Adrenal gland (tissue), 19 donors: ENCODE measurements at regions of chr11 and their contacts with region 1.

Region 1: DNA sequence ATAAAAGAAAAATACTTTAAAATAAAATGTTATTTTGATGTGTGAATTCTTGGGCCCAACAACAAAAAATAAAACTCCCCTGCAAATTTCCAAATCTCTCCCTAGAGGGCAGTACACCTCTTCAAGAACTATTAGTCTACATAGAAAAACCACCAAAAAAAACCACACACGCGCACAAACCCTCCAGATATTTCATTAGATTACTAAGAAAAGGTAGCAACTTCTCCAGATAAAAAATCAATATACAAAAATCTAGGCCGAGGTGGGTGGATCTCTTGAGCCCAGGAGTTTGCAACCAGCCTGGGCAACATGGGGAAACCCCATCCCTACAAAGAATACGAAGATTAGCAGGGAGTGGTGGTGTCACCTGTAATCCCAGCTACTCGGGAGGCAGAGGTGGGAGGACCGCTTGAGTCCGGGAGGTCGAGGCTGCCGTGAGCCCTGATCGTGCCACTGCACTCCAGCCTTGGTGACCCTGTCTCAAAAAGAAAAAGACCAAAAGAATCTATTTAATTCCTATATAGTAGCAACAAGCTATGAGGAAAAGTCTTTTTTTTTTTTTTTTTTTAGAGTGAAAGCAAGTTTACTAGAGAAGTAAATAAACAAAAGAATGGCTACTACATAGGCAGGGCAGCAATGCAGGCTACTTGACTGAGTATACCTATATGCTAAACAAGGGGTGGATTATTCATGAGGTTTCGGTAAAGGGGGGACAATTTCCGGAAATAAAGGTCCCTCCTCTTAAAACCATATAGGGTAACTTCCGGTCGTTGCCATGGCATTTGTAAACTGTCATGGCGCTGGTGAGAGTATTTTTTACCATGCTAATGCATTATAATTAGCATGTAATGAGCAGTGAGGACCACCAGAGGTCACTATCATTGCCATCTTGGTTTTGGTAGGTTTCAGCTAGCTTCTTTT is 13.1 kb downstream of the B3GNT6 start:
- DNase-seq: peak; percentile 83 to 94 (median 91)
- H3K4me3 ChIP-seq: peak overlapping the region in 2 of 4 donors; percentile 30 to 56
- H3K27ac ChIP-seq: peak overlapping the region in 2 of 5 donors; percentile 46 to 70
- H3K4me1 ChIP-seq: peaks cover 0 to 5% of the 10 kb centered on the region in 2 donors
- H3K27me3 ChIP-seq: peaks cover 7% of the 10 kb centered on the region
- CTCF ChIP-seq: peak; percentile 68 to 95 (median 80)
- POLR2A ChIP-seq: no peak

Region 2: DNA sequence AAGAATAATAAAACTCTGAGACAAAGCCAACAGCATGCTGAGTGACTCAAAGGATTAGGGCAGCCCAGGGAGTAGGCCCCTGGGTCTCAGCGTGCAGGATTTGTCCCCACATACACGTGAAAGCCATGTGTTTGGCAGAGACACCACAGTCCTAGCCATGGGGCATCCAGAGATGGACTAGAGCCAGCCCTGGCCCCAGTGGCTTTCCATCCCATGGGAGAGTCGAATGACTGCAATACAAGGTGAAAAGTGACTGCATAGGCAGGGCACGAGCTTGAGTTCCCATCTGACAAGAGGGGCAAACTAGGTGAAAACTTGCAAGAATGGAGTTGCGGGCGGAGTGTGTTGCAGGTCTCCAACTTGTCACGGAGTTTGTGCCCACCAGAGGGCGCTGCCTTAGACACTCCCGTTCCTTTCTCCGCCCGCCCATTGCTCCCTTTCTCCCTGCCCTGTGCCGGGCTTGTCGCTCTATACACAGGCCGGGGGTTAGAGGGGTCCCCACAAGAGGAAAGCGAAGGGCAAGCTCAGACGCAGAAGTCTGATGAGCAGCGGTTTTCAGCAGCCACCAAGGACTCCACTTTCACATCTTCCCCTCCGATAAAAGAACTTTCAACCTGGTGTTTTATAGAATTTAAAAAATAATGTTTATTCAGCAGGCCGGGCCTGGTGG is 239.9 kb before region 1 on chr11:
- intact Hi-C with region 1: loop called in 1 of 2 experiments (anchors 10 kb)
- DNase-seq: peak; percentile 79 to 94 (median 89)
- H3K4me3 ChIP-seq: no peak overlapping the region
- H3K27ac ChIP-seq: peak overlapping the region in 1 of 5 donors; percentile 0
- H3K4me1 ChIP-seq: peaks cover 0 to 4% of the 10 kb centered on the region in 2 donors
- H3K27me3 ChIP-seq: no peaks in the 10 kb centered on the region
- CTCF ChIP-seq: peak; percentile 64 to 85 (median 76)
- POLR2A ChIP-seq: no peak

Region 3: GRCh38 chr11:76872959-76873827 is 174.1 kb before region 1 on chr11:
- intact Hi-C with region 1: no loop called
- DNase-seq: no peak
- H3K4me3 ChIP-seq: no peak overlapping the region
- H3K27ac ChIP-seq: no peak overlapping the region
- H3K4me1 ChIP-seq: no peaks in the 10 kb centered on the region
- H3K27me3 ChIP-seq: no peaks in the 10 kb centered on the region
- CTCF ChIP-seq: no peak
- POLR2A ChIP-seq: no peak

Region 4: DNA sequence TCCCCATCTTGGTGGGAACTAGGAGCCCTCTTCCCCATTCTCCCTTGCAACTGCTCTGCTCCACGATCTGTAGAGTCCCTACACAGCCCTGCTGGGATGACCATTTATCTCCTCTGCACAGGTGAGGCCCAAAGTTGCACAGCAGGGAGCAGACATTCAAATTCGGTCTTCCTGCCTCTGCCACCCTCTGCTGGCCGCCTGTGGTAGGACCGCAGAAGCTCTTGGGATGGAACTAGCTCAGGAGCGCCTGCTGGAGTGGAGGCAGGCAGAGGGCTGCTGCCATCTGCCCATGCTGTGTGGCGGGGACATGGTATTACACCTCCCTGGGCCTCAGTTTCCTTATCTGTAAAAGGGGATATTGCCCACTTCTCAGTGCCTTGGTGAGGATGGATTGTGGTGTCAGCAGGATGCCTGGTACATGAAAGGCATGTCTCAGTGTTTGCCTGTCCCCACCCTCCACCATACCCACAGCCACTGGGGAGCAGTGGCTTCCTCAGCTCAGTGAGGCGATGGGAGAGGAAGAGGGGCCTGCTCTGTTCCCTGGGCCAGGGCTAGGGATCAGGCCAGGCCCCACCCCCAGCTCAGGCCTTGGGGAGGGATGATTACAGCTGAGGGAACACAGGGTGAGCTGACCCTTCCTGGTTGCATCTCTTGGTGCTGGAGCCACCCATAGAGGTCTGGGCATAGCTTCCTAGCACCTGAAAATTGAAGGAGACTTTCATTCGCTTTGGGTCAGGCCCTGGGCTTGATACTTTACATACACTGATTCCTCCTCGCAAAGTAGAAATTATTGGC is 44.1 kb after region 1 on chr11:
- intact Hi-C with region 1: loop called (anchors 2 to 5 kb)
- DNase-seq: peak; percentile 80 to 95 (median 87)
- H3K4me3 ChIP-seq: no peak overlapping the region
- H3K27ac ChIP-seq: peak overlapping the region in 1 of 5 donors; percentile 9
- H3K4me1 ChIP-seq: peaks cover 1 to 4% of the 10 kb centered on the region in 2 donors
- H3K27me3 ChIP-seq: no peaks in the 10 kb centered on the region
- CTCF ChIP-seq: peak; percentile 89 to 98 (median 95)
- POLR2A ChIP-seq: no peak

Region 5: DNA sequence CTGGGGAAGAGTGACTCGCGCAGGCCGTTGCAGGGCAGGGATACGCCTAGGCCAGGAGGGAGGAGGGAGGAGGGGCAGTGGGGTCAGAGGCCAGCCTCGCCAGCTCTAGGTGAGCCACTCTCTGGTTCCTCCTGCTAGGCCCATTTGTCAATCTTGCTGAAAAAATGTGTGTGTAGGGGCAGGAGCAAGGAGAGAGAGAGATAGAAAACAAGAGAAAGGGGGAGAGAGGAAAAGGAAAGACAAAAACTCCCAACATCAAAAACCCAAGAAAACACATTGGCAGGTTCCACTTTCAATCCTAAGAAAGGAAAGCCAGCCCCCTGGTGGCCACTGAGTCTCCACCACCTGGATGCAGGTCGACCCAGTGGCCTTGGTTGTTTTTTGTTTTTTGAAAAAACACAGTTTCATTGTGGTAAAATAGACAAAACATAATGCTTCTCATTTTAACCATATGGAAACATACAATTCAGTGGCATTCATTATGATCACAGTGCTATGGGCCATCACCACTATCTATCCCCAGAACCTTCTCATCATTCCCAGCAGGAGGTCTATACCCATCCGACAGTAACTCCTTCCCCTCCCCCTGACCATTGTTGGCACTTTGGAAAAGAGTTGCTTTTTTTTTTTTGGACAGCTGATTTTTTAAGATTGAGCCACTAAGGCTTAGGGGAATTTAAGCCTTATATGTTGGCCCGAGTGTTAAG is 66.3 kb after region 1 on chr11:
- intact Hi-C with region 1: loop called in 1 of 2 experiments (anchors 5 kb)
- DNase-seq: peak in 5 of 7 donors; percentile 59 to 77 (median 70)
- H3K4me3 ChIP-seq: no peak overlapping the region
- H3K27ac ChIP-seq: no peak overlapping the region
- H3K4me1 ChIP-seq: peaks cover 25 to 28% of the 10 kb centered on the region in 2 donors
- H3K27me3 ChIP-seq: no peaks in the 10 kb centered on the region
- CTCF ChIP-seq: peak; percentile 32 to 66 (median 45)
- POLR2A ChIP-seq: no peak

Region 6: DNA sequence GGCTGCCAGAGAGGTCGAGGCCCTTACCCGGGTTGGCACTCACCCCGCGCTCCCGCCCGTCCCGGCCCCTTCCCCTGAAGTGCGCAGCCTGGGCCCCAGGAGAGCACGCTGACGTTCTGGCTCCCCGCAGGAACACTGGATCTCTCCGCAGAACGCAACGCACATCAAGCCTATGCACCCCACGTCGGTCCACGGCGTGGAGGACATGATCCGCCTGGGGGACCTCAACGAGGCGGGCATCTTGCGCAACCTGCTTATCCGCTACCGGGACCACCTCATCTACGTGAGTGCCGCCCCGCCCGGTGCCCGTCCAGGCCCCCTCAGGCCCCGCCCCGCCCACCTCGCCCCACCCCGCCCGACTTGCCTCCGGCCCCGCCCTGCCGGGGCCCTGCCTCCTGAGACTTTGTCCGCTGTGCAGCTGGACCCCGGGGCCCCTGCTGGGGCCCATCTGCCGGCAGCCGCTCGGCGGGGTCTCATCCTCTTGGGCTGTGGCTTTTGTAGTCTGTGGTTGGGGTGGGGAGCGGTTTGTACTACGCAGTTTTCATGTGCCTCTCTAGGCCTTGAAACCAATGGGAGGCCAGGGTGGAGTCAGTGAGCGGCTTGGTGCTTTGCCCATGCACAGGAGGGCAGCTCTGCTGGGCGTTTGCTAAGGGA is 100.5 kb after region 1 on chr11:
- intact Hi-C with region 1: no loop called
- DNase-seq: no peak
- H3K4me3 ChIP-seq: no peak overlapping the region
- H3K27ac ChIP-seq: no peak overlapping the region
- H3K4me1 ChIP-seq: peaks cover 14 to 15% of the 10 kb centered on the region in 2 donors
- H3K27me3 ChIP-seq: no peaks in the 10 kb centered on the region
- CTCF ChIP-seq: no peak
- POLR2A ChIP-seq: no peak

Region 7: DNA sequence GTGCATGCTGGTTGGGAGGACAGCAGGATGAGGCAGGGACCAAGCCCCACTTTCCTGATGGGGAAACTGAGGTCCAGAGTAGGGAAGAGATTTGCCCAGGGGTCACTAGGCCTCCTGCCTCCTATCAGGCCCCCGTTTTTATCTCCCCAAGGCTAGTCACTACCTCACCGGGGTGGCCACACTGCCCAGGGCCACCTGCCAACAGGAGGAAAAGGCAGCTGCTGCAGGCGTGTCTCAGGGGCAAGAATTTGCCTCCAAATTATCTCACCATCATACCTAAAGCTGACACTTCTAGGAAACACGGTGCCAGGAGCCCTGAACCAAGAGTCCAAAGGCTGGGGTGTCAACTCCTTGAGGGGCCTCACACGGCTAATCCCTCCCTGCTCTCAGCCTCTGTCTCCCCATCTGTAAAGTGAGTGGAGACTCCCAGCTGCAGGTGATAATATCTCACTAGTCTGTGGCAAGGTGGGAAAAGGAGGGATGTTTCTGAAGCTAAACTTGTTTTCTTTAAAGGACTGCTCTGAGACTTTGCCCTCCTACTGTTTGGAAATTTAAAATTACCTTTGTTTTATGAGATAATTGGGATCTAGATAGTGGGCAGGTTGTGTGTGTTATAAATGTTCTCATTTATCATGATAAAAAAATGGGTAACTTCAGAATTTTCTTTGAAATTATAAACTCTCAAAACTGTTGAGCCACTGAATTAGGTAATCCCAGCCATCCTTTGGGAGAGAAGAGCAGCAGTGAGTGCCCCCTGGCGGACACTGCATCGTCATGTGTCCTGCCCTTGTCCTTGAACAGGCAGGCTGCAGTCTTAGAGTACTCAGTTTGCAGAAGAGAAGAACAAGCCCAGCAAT is 140.7 kb after region 1 on chr11:
- intact Hi-C with region 1: loop called in 1 of 2 experiments (anchors 10 kb)
- DNase-seq: peak; percentile 83 to 96 (median 92)
- H3K4me3 ChIP-seq: no peak overlapping the region
- H3K27ac ChIP-seq: no peak overlapping the region
- H3K4me1 ChIP-seq: no peaks in the 10 kb centered on the region
- H3K27me3 ChIP-seq: no peaks in the 10 kb centered on the region
- CTCF ChIP-seq: peak; percentile 88 to 96 (median 95)
- POLR2A ChIP-seq: no peak